Posterior vena cava (tissue), 2 donors: ENCODE measurements at regions of chr11 and their contacts with region 1.

Region 1: GRCh38 chr11:128116885-128117284 is 470.5 kb downstream of the ETS1 start:
- DNase-seq: no peak

Region 2: DNA sequence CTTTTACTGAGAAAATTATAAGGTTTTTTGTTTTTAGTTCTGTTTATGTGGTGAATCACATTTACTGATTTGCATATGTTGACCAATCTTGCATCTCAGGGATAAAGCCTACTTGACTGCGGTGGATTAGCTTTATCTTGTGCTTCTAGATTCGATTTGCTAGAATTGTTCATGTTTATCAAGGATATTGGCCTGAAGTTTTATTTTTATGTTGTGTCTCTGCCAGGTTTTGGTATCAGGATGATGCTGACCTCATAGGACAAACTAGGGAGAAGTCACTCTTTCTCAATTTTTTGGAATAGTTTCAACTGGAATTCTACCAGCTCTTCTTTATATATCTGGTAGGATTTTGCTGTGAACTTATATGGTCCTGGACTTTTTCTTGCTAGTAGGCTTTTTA is 34.3 kb before region 1 on chr11:
- intact Hi-C with region 1: no loop called
- DNase-seq: no peak

Region 3: DNA sequence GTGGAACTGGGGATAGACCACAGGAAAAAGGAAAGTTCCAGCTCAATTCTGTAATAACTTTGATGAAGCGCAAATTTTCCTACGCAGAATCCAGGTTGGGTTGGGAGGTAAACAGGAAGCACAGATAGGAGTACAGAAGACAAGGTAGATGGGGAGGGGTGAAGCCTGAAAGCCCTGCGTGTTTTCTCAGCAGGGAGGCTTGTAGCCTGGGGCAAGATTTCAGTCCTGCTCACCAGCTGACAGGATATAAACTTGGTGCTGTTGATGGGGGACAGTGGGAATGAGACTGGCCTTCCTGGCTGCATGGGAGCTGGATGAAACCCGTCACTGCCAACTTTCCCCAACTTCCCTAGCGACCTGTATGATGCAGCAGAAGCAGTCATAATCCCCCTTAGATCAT is 960.3 kb after region 1 on chr11:
- intact Hi-C with region 1: loop called in 1 of 2 experiments (anchors 5 kb)
- DNase-seq: no peak